ENCODE measurements at regions of chr12 and their contacts with region 1.

Region 1: GRCh38 chr12:32918890-32919801 is 22.6 kb upstream of the PKP2 start:
- DNase-seq: peak; percentile 54
- H3K4me3 ChIP-seq: no peak overlapping the region
- H3K27ac ChIP-seq: peak overlapping the region; percentile 63
- H3K4me1 ChIP-seq: peaks cover 23% of the 10 kb centered on the region
- H3K27me3 ChIP-seq: no peaks in the 10 kb centered on the region
- CTCF ChIP-seq: peak; percentile 37 to 39
- POLR2A ChIP-seq: no peak

Region 2: GRCh38 chr12:32501835-32502333 is 417.3 kb before region 1 on chr12:
- CTCF ChIA-PET with region 1: no interaction called
- POLR2A ChIA-PET with region 1: no interaction called
- dilution Hi-C with region 1: no loop called
- intact Hi-C with region 1: no loop called
- DNase-seq: peak; percentile 59
- H3K4me3 ChIP-seq: peak overlapping the region in 1 of 3 experiments; percentile 33
- H3K27ac ChIP-seq: no peak overlapping the region
- H3K4me1 ChIP-seq: peaks cover 43% of the 10 kb centered on the region
- H3K27me3 ChIP-seq: no peaks in the 10 kb centered on the region
- CTCF ChIP-seq: no peak
- POLR2A ChIP-seq: no peak

Region 3: DNA sequence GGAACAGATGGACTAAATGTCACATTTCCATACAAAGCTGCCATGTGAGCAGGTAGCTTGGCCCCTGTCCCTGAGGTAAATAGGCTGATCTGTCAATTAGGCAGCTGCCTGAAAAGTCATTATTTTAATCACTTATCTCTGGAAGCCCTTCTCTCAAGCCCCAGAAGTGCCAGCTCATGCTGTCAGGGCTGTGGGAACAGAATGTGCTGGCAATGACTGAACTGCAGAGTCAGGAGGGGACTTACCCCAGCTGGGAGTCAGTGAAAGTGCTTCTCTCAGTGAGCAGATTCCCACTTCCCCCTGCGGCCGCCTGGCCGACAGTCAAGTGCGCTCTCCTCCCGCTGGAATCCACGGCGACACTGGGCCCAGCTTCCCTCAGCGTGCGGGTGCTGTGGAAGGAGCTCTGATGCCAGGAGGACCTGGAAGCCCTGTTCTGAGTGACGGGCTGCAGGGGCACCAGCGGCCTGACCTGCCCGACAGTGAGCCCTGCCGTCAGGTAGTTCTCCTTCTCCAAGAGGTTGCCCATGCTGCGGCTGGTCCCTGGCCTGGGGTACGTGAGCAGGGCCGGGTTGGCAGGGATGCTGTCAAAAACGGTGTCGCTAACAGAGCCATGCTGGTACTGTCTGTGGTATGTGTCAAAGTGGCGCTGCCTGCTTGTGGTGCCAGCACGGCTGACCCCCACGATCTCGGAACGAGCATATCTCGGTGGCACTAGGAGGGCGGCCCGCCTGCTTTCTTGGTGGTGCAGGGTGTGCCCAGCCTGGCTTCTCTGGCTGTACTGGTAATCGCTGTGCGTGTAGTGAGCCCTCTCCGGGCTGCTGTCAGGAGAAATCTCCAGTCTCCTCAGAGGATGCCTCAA is 41.3 kb before region 1 on chr12:
- CTCF ChIA-PET with region 1: no interaction called
- POLR2A ChIA-PET with region 1: no interaction called
- dilution Hi-C with region 1: no loop called
- intact Hi-C with region 1: no loop called
- DNase-seq: no peak
- H3K4me3 ChIP-seq: no peak overlapping the region
- H3K27ac ChIP-seq: no peak overlapping the region
- H3K4me1 ChIP-seq: no peaks in the 10 kb centered on the region
- H3K27me3 ChIP-seq: no peaks in the 10 kb centered on the region
- CTCF ChIP-seq: no peak
- POLR2A ChIP-seq: no peak

Region 4: DNA sequence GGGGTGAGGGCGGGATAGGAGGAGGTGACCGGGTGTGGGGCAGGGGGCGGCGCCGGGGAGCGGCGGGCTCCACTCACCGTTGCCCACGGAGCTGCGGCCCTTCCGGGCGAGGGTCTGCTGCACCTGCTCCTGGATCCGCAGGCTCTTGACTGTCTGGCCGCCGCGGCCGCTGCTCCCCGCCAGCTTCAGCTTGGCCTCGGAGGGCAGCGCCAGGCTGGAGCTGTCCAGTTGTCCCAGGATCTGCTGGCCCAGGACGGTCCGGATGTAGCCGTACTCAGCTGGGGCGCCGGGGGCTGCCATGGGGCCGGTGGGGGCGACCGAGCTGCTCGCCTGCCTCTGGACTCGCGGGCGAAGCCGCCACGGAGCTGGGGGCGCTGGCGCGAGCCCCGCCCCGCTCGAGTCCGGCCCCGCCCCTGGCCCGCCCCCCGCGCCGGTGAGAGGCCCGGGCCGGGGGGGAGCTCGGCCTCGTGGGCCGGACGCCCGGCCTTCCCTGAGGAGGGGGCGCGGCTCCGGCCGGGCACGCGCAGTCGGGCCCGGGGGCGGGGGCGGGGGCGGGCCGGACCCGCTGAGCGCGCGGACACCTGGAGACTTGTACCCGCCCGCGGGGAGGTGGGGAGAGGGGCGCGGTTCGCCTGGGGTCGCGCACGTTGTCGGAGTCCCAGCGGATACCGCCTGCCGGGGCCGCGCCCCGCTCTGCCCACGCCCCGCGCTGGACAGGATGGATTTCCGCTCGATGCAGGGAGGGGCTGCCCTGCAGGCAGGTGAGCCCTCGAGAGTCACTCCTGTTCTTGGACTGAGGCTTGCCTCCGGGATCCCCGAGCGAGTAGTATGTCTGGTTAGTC is 22.5 kb before region 1 on chr12 and contains the start of gene PKP2:
- CTCF ChIA-PET with region 1: interaction called, 10 read pairs
- POLR2A ChIA-PET with region 1: no interaction called
- dilution Hi-C with region 1: no loop called
- intact Hi-C with region 1: loop called (anchors 1 kb)
- DNase-seq: peak; percentile 36
- H3K4me3 ChIP-seq: peak within 1 kb of the TSS in 2 of 3 experiments; percentile 58 to 61
- H3K27ac ChIP-seq: no peak within 1 kb of the TSS
- H3K4me1 ChIP-seq: peaks cover 12% of the 10 kb centered on the region
- H3K27me3 ChIP-seq: peaks cover 8 to 15% of the 10 kb centered on the region in 2 experiments
- CTCF ChIP-seq: no peak
- POLR2A ChIP-seq: no peak
- total RNA-seq, gene PKP2: 6.5 and 9.1 TPM in 2 replicates